ENCODE measurements at regions of chr4 and their contacts with region 1.

Region 1: GRCh38 chr4:84737656-84738055 is 154.7 kb downstream of the CDS1 start:
- DNase-seq: no peak
- ATAC-seq: no peak
- H3K4me3 ChIP-seq: no peak overlapping the region
- H3K27ac ChIP-seq: no peak overlapping the region
- H3K4me1 ChIP-seq: no peaks in the 10 kb centered on the region
- H3K27me3 ChIP-seq: no peaks in the 10 kb centered on the region
- CTCF ChIP-seq: no peak
- POLR2A ChIP-seq: no peak
- RAD21 ChIP-seq: no peak

Region 2: GRCh38 chr4:84699001-84699671 is 38.5 kb before region 1 on chr4:
- CTCF ChIA-PET with region 1: no interaction called
- POLR2A ChIA-PET with region 1: no interaction called
- dilution Hi-C with region 1: no loop called
- in situ Hi-C with region 1: no loop called
- intact Hi-C with region 1: loop called (anchors 5 kb)
- DNase-seq: no peak
- ATAC-seq: no peak
- H3K4me3 ChIP-seq: no peak overlapping the region
- H3K27ac ChIP-seq: no peak overlapping the region
- H3K4me1 ChIP-seq: peaks cover 2% of the 10 kb centered on the region; the same call in 1 of the 2 replicates
- H3K27me3 ChIP-seq: no peaks in the 10 kb centered on the region
- CTCF ChIP-seq: no peak
- POLR2A ChIP-seq: no peak
- RAD21 ChIP-seq: no peak

Region 3: DNA sequence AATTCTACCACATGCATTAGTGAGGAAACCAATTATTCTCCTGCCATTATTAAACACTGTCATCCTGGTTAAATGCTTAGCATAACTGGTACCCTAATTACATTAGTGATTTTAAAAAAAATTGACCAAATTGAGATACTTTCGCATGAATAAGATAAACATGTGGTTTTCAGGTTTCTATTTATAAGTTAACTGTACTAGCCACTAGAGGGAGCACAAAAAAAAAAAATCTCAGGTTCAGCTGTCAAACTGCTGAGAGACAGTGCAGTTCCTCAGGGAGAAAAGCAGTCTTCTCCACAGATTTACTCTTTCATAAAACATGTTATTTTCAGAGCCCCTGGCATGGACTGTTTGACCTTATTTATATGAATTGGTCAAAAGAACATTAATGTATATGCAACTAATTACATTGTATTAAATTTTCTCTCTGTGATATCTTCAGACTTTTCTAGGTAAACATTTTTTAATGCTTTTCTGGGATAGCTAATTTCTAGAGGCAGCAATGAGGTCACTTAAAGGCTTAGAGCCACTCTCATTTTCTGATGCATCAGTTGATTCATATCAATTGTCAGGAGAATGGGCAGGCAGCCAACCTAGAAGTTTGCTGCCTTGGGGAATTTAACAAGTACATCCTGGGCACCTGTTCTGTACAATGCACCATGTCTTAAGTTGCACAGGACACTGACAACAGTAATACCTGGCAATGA is 12.8 kb after region 1 on chr4:
- CTCF ChIA-PET with region 1: interaction called, 10 read pairs
- POLR2A ChIA-PET with region 1: no interaction called
- dilution Hi-C with region 1: no loop called
- in situ Hi-C with region 1: no loop called
- intact Hi-C with region 1: no loop called
- DNase-seq: peak; percentile 65
- ATAC-seq: peak; percentile 59
- H3K4me3 ChIP-seq: no peak overlapping the region
- H3K27ac ChIP-seq: no peak overlapping the region
- H3K4me1 ChIP-seq: no peaks in the 10 kb centered on the region
- H3K27me3 ChIP-seq: no peaks in the 10 kb centered on the region
- CTCF ChIP-seq: peak; percentile 64
- POLR2A ChIP-seq: no peak
- RAD21 ChIP-seq: peak; percentile 60

Measured in IMR-90 (cell line).